ENCODE measurements at regions of chr1 and their contacts with region 1.

Region 1: DNA sequence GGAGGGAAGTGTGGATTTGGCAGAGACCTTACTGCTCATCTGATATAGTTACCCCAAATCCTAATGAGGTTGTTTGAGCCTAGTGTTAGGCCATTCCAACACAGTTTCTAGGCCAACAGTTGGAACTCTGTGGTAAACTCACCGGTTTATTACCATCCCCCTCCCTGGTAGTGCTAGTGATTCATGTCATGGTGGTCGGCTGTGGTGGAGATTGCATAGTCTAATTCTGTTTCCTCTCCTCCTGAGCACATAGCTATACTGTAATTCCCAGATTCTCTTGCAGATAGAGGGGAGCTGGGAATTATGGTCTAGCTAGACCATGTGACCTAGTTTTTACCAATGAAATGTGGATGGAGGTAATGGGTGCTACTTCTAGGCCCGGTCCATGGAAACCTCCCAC is 123.7 kb upstream of the KIF26B start:
- DNase-seq: no peak
- H3K4me3 ChIP-seq: no peak overlapping the region
- H3K27ac ChIP-seq: no peak overlapping the region
- H3K4me1 ChIP-seq: no peaks in the 10 kb centered on the region
- H3K27me3 ChIP-seq: no peaks in the 10 kb centered on the region
- CTCF ChIP-seq: no peak
- POLR2A ChIP-seq: no peak

Region 2: DNA sequence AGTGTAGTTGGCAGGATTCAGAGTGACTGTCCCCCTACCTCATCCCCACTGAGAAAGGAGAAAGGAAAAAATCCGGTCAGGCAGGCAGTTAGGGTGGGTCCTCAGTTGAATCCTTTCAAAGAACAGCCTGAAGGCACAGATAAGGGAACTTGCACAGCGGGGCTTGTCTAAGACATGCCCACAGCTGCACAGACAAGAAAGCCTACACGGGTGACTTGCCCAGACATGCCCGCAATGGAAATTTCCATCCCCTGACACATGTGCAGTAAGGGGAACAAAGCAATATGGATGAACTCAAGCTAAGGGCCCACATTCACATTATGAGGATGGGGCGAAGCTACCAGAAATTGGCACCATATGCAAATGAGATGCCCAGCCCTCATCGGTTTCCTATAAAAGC is 295.6 kb before region 1 on chr1:
- intact Hi-C with region 1: no loop called
- DNase-seq: no peak
- H3K4me3 ChIP-seq: no peak overlapping the region
- H3K27ac ChIP-seq: no peak overlapping the region
- H3K4me1 ChIP-seq: peaks cover 0 to 4% of the 10 kb centered on the region in 2 donors
- H3K27me3 ChIP-seq: no peaks in the 10 kb centered on the region
- CTCF ChIP-seq: no peak
- POLR2A ChIP-seq: no peak

Region 3: DNA sequence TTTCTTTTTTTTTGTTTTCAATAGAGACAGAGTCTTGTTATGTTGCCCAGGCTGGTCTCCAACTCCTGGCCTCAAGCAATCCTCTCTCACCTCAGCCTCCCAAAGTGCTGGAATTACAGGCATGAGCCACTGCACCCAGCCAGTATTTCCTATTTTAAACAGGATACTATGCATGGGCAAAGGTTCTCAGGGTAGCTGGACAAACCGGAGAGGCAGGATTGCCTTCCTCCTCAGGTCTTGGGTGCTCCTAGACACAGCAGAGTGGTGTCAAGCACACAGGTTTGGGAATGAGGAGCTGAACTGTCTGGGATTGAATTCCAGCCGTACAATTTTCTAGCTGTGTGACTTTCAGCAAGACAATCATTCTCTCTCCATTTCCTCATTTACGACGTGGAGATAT is 143.8 kb before region 1 on chr1:
- intact Hi-C with region 1: loop called (anchors 5 kb)
- DNase-seq: no peak
- H3K4me3 ChIP-seq: no peak overlapping the region
- H3K27ac ChIP-seq: no peak overlapping the region
- H3K4me1 ChIP-seq: no peaks in the 10 kb centered on the region
- H3K27me3 ChIP-seq: no peaks in the 10 kb centered on the region
- CTCF ChIP-seq: no peak
- POLR2A ChIP-seq: no peak

Region 4: GRCh38 chr1:245041058-245041698 is 10.1 kb after region 1 on chr1:
- intact Hi-C with region 1: loop called (anchors 1 kb)
- DNase-seq: no peak
- H3K4me3 ChIP-seq: no peak overlapping the region
- H3K27ac ChIP-seq: no peak overlapping the region
- H3K4me1 ChIP-seq: no peaks in the 10 kb centered on the region
- H3K27me3 ChIP-seq: no peaks in the 10 kb centered on the region
- CTCF ChIP-seq: no peak
- POLR2A ChIP-seq: no peak

Region 5: DNA sequence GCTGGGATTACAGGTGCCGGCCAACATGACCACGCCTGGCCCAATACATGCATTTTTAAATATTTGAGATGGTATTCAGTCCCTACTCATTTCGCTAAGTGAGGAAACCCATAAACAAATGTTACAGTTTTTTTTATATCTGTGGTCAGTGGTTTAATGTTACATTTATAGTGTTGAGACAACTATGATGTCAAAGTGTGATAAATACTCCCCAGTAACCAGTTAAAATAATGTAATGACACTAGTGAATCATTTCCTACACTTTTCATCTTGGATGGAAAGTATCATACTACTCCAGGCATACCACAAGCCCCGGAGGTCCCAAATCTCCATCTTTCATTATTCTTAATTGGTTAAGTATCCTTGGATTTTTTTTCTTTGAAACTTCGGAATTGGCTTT is 36.2 kb after region 1 on chr1:
- intact Hi-C with region 1: no loop called
- DNase-seq: no peak
- H3K4me3 ChIP-seq: no peak overlapping the region
- H3K27ac ChIP-seq: no peak overlapping the region
- H3K4me1 ChIP-seq: no peaks in the 10 kb centered on the region
- H3K27me3 ChIP-seq: no peaks in the 10 kb centered on the region
- CTCF ChIP-seq: no peak
- POLR2A ChIP-seq: no peak

Region 6: DNA sequence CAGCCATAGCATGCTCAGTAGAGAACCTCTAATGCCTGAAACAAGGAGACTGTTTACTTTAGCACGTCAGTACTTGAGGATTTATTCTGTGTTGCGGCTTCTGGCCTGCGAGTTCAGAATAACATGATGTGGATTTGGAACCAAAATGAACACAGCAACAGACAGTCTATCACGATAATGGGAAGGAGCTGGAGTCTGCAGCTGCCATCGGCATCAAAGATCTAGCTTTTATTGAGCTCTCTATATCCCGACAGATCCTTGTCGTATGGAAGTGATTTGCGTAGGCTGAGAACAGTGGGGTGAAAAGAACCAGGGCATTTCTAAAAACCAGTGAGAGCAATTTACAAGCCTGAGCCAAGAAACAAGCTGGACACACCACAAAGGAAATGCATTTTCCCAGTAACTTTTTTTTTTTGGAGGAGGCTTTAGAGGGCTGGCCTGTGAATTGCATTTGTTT is 418.0 kb after region 1 on chr1:
- intact Hi-C with region 1: no loop called
- DNase-seq: no peak
- H3K4me3 ChIP-seq: no peak overlapping the region
- H3K27ac ChIP-seq: no peak overlapping the region
- H3K4me1 ChIP-seq: no peaks in the 10 kb centered on the region
- H3K27me3 ChIP-seq: no peaks in the 10 kb centered on the region
- CTCF ChIP-seq: no peak
- POLR2A ChIP-seq: no peak